HepG2 (cell line): ENCODE measurements at regions of chr1 and their contacts with region 1.

Region 1: DNA sequence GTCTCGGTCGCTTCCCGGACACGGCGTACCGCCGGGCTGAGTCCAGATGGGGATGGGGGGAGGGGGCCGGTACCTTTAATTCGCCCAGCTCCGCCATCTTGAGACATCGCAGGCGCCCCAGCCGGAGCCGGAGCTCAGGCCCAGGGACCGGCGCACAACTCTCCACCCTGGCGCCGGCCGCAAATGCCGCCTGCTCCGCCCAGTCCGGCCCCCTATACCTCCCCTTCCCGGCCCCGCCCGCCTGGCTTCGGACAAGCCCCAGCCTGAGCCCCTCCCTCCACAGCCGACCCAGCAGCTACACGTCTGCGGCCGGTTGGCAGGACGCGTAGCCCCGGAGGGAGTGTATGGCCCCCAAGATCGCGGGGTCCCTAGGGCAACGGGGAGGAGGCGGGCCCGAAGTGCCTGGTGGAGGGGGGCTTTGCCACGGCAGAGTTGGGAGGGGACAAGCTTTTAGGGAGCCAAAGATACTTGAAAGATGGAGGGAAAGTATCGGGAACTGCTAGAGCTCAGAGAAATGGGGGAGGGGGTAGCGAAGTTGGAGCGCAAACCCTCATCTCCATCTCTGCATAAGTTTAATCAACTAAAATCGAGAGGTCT is at the start of gene PIAS3:
- DNase-seq: peak; percentile 76
- ATAC-seq: peak; percentile 92
- H3K4me3 ChIP-seq: peak within 1 kb of the TSS; percentile 82 to 92 (median 87)
- H3K27ac ChIP-seq: peak within 1 kb of the TSS; percentile 51
- H3K4me1 ChIP-seq: peaks cover 21% of the 10 kb centered on the region
- H3K27me3 ChIP-seq: 0 out of 5 replicates have a peak, but pooled peaks cover 0 to 3% of the 10 kb centered on the region in 2 experiments
- CTCF ChIP-seq: no peak
- EP300 ChIP-seq: no peak
- POLR2A ChIP-seq: peak in 1 of 2 experiments; percentile 50; a peak in 2 of 4 replicates
- RAD21 ChIP-seq: peak; percentile 17; the same call in 1 of the 2 replicates
- total RNA-seq, gene PIAS3: 3.7 and 4.6 TPM in 2 replicates

Region 2: DNA sequence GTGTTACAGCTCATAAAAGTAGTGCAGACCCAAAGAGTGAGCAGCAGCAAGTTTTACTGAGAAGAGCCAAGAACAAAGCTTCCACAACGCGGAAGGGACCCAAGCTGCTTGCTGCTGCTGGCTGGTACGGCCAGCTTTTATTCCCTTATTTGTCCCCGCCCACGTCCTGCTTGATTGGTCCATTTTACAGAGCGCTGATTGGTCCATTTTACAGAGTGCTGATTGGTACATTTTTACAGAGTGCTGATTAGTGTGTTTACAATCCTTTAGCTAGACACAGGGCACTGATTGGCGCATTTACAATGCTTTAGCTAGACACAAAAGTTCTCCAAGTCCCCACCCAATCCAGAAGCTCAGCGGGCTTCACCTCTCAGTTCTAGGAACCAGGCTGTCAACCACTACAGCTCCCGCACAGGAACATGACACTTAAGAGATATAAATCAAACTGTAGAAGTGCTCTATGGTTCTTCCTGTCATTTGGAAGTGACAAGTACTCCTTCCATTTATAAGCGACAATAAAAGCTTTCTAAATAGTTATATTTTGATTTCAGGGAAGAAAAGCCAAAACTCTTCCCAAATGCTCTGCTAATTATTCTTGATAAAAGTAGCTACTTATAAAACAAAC is 63.6 kb before region 1 on chr1:
- CTCF ChIA-PET with region 1: no interaction called
- POLR2A ChIA-PET with region 1: no interaction called
- in situ Hi-C with region 1: no loop called
- intact Hi-C with region 1: no loop called
- DNase-seq: no peak
- ATAC-seq: no peak
- H3K4me3 ChIP-seq: no peak overlapping the region
- H3K27ac ChIP-seq: no peak overlapping the region
- H3K4me1 ChIP-seq: peaks cover 13% of the 10 kb centered on the region
- H3K27me3 ChIP-seq: no peaks in the 10 kb centered on the region
- CTCF ChIP-seq: no peak
- EP300 ChIP-seq: no peak
- POLR2A ChIP-seq: no peak
- RAD21 ChIP-seq: no peak

Region 3: GRCh38 chr1:145845514-145846161 is 13.4 kb before region 1 on chr1 and contains the start of gene NUDT17:
- CTCF ChIA-PET with region 1: interaction called, 3 read pairs
- POLR2A ChIA-PET with region 1: interaction called, 44 read pairs
- in situ Hi-C with region 1: no loop called
- intact Hi-C with region 1: no loop called
- DNase-seq: peak; percentile 52
- ATAC-seq: peak; percentile 87
- H3K4me3 ChIP-seq: peak within 1 kb of the TSS; percentile 55 to 78 (median 66)
- H3K27ac ChIP-seq: no peak within 1 kb of the TSS
- H3K4me1 ChIP-seq: peaks cover 12% of the 10 kb centered on the region
- H3K27me3 ChIP-seq: no peaks in the 10 kb centered on the region
- CTCF ChIP-seq: peak; percentile 94
- EP300 ChIP-seq: no peak
- POLR2A ChIP-seq: no peak; a peak in 1 of 4 replicates
- RAD21 ChIP-seq: peak; percentile 78
- total RNA-seq, gene NUDT17: 2.6 TPM in 2 replicates

Region 4: GRCh38 chr1:145891587-145892485 is 32.8 kb after region 1 on chr1:
- CTCF ChIA-PET with region 1: no interaction called
- POLR2A ChIA-PET with region 1: interaction called, 14 read pairs
- in situ Hi-C with region 1: no loop called
- intact Hi-C with region 1: loop called (anchors 5 kb)
- DNase-seq: peak; percentile 99
- ATAC-seq: peak; percentile 94
- H3K4me3 ChIP-seq: peak overlapping the region in 1 of 3 experiments; percentile 21; a peak in 2 of 6 replicates
- H3K27ac ChIP-seq: peak overlapping the region; percentile 63
- H3K4me1 ChIP-seq: peaks cover 81% of the 10 kb centered on the region
- H3K27me3 ChIP-seq: no peaks in the 10 kb centered on the region
- CTCF ChIP-seq: peak; percentile 98
- EP300 ChIP-seq: peak in 1 of 2 experiments; percentile 90; a peak in 2 of 4 replicates
- POLR2A ChIP-seq: no peak
- RAD21 ChIP-seq: peak; percentile 99

Region 5: GRCh38 chr1:145918144-145918992 is 59.4 kb after region 1 on chr1 and contains the start of gene PEX11B:
- CTCF ChIA-PET with region 1: no interaction called
- POLR2A ChIA-PET with region 1: interaction called, 25 read pairs
- in situ Hi-C with region 1: no loop called
- intact Hi-C with region 1: loop called (anchors 5 kb)
- DNase-seq: peak; percentile 70
- ATAC-seq: peak; percentile 90
- H3K4me3 ChIP-seq: peak within 1 kb of the TSS; percentile 79 to 99 (median 92)
- H3K27ac ChIP-seq: peak within 1 kb of the TSS; percentile 78
- H3K4me1 ChIP-seq: peaks cover 18% of the 10 kb centered on the region
- H3K27me3 ChIP-seq: no peaks in the 10 kb centered on the region; a peak in 1 of 5 replicates
- CTCF ChIP-seq: no peak; the same call in 1 of the 2 replicates
- EP300 ChIP-seq: no peak
- POLR2A ChIP-seq: peak; percentile 25 to 68; a peak in 2 of 4 replicates
- RAD21 ChIP-seq: no peak
- total RNA-seq, gene PEX11B: 21.6 and 26.2 TPM in 2 replicates

Region 6: GRCh38 chr1:146049436-146049835 is 190.4 kb after region 1 on chr1:
- CTCF ChIA-PET with region 1: no interaction called
- POLR2A ChIA-PET with region 1: interaction called, 15 read pairs
- in situ Hi-C with region 1: no loop called
- intact Hi-C with region 1: no loop called
- DNase-seq: no peak
- ATAC-seq: no peak
- H3K4me3 ChIP-seq: no peak overlapping the region
- H3K27ac ChIP-seq: peak overlapping the region; percentile 94
- H3K4me1 ChIP-seq: peaks cover 69% of the 10 kb centered on the region
- H3K27me3 ChIP-seq: no peaks in the 10 kb centered on the region
- CTCF ChIP-seq: no peak
- EP300 ChIP-seq: no peak
- POLR2A ChIP-seq: no peak
- RAD21 ChIP-seq: no peak